ENCODE measurements at regions of chr12 and their contacts with region 1.

Region 1: DNA sequence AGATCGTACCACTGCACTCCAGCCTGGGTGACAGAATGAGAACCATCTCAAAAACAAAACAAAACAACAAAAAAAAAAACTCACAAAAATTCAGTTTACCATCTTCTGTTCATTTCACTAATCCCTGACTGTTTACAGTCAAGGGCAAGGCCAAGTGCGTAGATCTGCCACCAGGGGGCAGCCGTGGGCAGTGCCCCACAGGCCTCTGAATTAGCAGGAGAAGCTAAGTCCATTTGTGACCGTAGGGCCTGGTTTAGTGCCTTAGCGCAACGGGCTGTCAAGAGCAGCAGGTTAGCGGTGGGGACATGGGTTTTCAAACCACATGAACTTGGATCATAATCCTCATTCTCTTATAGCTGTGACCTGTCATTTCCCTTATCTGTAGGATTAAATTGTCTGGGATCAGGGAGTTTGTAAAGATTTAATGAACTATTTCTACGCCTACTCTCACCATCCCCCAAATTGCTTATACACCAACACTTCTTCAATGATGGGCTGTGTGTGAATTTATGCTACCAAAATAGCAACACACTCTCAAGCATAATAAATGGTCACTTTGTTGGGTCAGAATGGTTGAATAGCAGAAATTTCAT is 49.0 kb downstream of the KCTD10 start:
- DNase-seq: peak; percentile 74 to 85
- ATAC-seq: peak; percentile 80 to 88
- H3K4me3 ChIP-seq: no peak overlapping the region
- H3K27ac ChIP-seq: no peak overlapping the region
- H3K4me1 ChIP-seq: 0 out of 3 replicates have a peak, but pooled peaks cover 3% of the 10 kb centered on the region
- CTCF ChIP-seq: peak; percentile 92
- EP300 ChIP-seq: no peak
- POLR2A ChIP-seq: no peak
- RAD21 ChIP-seq: peak; percentile 57 to 72

Region 2: DNA sequence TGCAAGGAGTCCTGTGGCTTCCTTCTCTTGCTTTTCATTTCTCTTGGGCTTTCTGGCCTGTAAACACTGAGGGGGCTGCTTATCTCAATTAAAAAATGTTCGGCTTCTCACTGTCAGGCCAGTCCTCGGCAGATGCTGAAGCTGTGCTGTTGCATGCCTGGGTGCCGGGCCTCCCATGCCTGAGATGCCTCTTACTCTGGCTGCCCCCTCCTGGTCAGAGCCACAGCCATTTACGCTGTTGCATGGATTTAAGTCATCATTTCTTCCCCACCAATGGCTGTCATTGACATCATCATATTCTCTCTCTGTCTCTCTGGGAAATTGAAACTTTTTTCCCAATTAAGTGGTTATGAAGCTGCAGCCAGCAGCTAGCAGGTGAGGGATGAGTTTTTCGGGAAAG is 172.8 kb before region 1 on chr12:
- CTCF ChIA-PET with region 1: no interaction called
- POLR2A ChIA-PET with region 1: no interaction called
- DNase-seq: peak in 1 of 2 experiments; percentile 45
- ATAC-seq: peak in 1 of 2 experiments; percentile 78; a peak in 3 of 6 replicates
- H3K4me3 ChIP-seq: no peak overlapping the region
- H3K27ac ChIP-seq: no peak overlapping the region
- H3K4me1 ChIP-seq: no peaks in the 10 kb centered on the region
- CTCF ChIP-seq: no peak
- EP300 ChIP-seq: no peak
- POLR2A ChIP-seq: no peak
- RAD21 ChIP-seq: peak in 1 of 2 experiments; percentile 45; a peak in 1 of 5 replicates

Region 3: DNA sequence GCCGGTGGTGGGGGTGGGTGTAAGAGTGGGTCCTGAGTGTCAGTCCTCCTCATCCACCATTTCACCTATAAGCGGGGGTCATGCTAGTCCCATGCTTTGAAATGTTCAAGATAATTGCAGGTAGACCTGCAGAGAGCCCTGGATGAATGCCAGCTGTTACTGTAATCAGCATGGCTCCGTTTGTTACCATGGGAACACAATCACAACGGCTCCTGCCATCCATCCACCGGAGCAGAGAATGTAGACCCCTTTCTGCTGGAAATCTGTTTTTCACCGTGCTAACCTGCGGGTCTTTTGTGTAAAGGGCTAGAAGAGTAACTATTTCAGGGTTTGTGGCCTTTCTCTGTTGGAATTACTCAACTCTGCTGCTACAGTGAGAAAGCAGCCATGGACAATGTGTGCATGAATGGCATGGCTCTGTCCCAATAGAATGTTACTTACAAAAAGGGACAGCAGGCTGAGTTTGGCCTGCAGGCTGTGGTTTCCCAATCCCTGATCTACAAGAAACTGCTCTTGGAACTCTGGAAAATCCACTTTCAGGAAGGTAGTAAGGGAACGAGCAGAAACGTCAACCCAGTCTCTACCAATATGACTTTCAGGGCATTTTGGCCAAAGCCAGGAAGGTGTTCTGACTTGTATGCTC is 12.8 kb after region 1 on chr12:
- CTCF ChIA-PET with region 1: interaction called, 24 read pairs
- POLR2A ChIA-PET with region 1: no interaction called
- DNase-seq: no peak
- ATAC-seq: no peak
- H3K4me3 ChIP-seq: no peak overlapping the region
- H3K27ac ChIP-seq: no peak overlapping the region
- H3K4me1 ChIP-seq: no peaks in the 10 kb centered on the region
- CTCF ChIP-seq: no peak
- EP300 ChIP-seq: no peak
- POLR2A ChIP-seq: no peak
- RAD21 ChIP-seq: no peak

Region 4: DNA sequence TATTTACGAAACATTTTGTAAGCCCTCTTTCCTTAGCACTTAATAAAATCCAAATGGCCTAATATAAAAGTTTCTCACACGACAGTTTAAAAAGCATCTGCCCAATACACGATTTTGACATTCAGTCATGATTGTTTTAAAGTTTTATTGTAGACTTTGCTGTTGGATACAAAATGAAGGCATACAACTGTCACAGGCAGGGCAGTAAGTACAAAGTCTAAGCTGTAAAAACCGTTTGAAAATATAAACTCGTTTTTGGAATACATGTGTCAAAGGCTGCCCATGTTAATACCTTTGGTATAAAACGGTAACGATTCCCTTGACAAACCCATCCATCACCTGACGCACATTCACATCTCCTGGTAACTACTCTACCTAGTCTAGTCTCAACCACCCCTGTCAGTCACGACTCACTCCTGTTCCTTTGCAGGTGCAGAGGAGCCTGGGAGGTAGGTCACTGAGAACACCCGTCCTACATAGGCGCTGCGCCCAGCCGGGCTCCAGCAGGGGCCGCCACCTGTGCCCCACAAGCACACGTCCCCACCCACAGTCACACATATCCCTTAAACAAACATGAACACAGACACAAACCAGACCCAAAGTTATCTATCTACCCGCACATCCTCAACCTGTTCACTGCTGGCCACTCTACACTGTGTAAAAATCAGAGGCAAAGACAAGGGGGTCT is 21.9 kb after region 1 on chr12:
- CTCF ChIA-PET with region 1: interaction called, 24 read pairs
- POLR2A ChIA-PET with region 1: no interaction called
- DNase-seq: peak in 1 of 2 experiments; percentile 31
- ATAC-seq: peak; percentile 68 to 82; a peak in 5 of 6 replicates
- H3K4me3 ChIP-seq: no peak overlapping the region
- H3K27ac ChIP-seq: no peak overlapping the region
- H3K4me1 ChIP-seq: no peaks in the 10 kb centered on the region
- CTCF ChIP-seq: peak; percentile 20; the same call in 1 of the 3 replicates
- EP300 ChIP-seq: no peak
- POLR2A ChIP-seq: no peak
- RAD21 ChIP-seq: no peak

Region 5: DNA sequence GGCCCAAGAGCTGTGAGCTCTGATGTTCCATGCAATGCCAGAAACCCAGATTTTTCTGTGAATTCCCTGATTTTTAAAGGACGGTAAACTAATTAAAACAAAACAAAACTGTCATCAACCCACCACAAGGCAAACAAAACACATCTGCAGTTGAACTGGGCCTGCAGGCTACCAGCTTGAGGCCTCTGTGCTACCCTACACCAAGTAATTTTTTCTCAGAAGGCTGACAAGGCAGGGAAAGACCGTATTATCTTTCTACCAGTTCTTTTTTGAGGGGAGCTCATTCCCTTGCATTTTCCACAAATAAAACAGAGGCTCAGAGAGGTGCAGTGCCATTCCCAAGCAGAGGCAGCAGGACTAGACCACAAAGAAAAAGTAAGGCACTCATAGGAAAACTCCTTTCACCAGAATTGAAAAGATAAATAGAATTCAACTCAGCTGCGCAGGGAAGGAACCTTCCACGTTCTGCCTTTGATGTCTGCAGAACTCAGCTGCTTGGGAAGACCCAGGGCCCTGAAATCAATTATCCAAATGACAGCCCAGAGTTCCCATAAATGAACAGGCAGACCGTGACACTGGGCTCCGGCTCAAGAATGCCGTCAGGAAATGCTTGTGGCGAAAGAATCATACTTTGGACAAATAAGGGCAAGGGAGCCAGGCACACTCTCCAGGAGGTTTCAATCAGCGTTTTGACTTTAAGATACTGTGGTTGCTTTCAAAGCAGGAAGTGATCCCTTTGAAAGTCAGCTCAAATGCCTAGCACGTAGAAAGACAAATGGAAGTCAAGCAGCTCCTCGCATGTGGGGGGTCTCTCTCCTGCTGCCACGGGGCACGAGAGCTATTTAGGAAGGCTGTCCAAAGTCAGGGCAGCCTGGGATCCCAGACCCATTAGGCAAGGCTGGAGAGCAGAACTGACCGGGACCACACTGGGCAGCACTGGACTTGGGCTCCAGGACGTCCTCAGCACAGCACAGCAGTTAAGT is 34.9 kb after region 1 on chr12:
- CTCF ChIA-PET with region 1: interaction called, 21 read pairs
- POLR2A ChIA-PET with region 1: no interaction called
- DNase-seq: peak in 1 of 2 experiments; percentile 59
- ATAC-seq: peak; percentile 25 to 71; a peak in 4 of 6 replicates
- H3K4me3 ChIP-seq: no peak overlapping the region
- H3K27ac ChIP-seq: peak overlapping the region; percentile 58 to 87
- H3K4me1 ChIP-seq: peaks cover 39% of the 10 kb centered on the region
- CTCF ChIP-seq: no peak
- EP300 ChIP-seq: no peak
- POLR2A ChIP-seq: no peak
- RAD21 ChIP-seq: no peak

Region 6: DNA sequence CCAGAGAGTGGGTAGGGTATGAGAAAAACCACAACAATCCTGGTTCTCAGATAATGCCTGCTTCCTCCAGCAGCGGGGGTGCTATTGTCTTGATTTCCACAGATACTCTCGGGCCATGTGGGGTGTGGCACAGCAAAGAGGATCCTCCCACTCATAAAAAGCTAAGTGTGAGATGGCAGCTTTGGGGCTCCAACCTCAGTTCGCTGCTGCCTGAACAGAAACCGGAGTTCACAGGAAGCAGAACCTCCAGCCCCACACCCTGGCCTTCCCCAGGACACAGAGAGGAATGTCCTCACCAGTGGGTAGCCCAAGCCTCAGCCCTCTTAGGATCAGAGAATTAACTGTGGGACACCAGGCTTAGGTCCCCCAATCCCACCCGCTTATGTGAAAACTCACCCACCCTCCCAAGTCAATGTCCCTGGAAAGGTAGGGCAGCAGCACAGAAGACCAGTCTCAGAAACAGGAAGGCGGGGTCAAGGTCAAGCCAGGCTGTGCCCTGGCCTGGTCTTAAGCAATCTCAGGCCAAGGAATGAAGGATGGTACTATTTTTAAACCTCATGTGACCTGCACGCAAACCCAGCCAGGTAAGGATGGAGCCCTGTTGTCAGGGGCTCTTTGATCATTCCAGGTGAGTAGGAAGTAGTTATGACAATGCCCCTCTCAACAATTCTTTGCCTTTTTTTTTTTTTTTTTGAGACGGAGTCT is 40.0 kb after region 1 on chr12:
- CTCF ChIA-PET with region 1: interaction called, 21 read pairs
- POLR2A ChIA-PET with region 1: no interaction called
- DNase-seq: no peak
- ATAC-seq: no peak
- H3K4me3 ChIP-seq: no peak overlapping the region
- H3K27ac ChIP-seq: no peak overlapping the region
- H3K4me1 ChIP-seq: peaks cover 13% of the 10 kb centered on the region
- CTCF ChIP-seq: no peak
- EP300 ChIP-seq: no peak
- POLR2A ChIP-seq: no peak
- RAD21 ChIP-seq: no peak

Region 7: DNA sequence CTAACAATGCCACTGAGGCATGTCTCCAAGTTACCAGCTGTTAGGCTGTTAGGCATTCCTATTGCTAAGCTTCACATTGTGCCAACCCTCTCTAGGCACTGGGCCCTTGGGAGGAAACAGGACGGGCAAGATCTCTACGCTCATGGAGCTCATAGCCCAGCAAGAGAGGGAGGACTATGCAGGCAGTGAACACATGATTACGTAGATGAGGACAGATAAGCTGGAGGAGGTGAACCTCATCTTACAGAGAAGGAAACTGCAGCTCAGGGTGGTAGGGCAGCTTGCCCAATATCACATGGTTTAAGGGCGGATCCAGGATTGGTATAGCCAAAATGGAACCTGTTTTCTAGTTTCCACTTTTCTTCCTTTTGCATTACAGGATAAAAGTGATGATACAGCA is 57.1 kb after region 1 on chr12:
- CTCF ChIA-PET with region 1: interaction called, 11 read pairs
- POLR2A ChIA-PET with region 1: no interaction called
- DNase-seq: no peak
- ATAC-seq: no peak
- H3K4me3 ChIP-seq: no peak overlapping the region
- H3K27ac ChIP-seq: no peak overlapping the region
- H3K4me1 ChIP-seq: no peaks in the 10 kb centered on the region
- CTCF ChIP-seq: no peak
- EP300 ChIP-seq: no peak
- POLR2A ChIP-seq: no peak
- RAD21 ChIP-seq: no peak

Region 8: DNA sequence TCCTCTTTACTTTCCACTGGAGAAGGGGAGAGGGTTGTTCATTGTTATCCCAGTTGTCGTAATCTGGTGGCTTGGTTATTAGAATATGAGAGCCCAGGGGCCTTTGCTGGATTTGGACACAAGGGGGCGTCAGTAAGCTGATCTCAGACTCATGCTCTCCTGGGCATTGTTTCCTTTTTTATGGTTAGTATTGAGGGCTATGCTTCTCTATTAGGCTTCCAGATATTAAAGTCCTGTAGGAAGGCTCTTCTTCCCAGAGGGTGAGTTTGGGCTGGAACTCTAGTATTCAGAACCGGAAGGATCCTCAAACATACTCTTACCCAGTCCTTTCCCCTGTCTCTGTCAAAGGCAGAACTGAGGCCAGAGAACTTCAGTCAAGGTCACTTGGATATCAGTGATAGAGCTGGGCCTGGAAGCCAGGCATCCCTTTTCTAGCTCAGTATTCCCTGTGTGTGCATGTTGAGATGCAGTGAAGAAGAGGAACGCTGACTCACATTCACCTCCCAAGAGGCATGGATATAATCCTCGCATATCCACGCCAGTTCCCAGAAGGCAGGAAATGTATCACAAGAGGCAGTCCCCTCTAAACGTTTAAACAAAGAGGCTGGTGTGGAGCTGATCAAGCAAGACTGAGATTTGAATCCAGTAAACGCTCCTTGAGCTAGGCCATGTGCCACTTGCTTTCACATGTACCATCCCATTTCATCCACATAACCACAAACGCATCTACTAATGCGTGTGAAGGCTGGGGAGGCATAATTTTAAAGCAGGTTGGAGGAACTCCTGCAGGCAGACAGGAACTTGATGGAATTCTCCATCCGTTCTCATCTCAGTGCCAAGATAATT is 90.9 kb after region 1 on chr12:
- CTCF ChIA-PET with region 1: interaction called, 10 read pairs
- POLR2A ChIA-PET with region 1: no interaction called
- DNase-seq: peak; percentile 48 to 80
- ATAC-seq: peak; percentile 64 to 91; a peak in 4 of 6 replicates
- H3K4me3 ChIP-seq: no peak overlapping the region
- H3K27ac ChIP-seq: no peak overlapping the region
- H3K4me1 ChIP-seq: no peaks in the 10 kb centered on the region
- CTCF ChIP-seq: peak; percentile 86
- EP300 ChIP-seq: no peak
- POLR2A ChIP-seq: no peak
- RAD21 ChIP-seq: peak; percentile 74 to 82

Region 9: GRCh38 chr12:109927622-109928021 is 499.5 kb after region 1 on chr12:
- CTCF ChIA-PET with region 1: no interaction called
- POLR2A ChIA-PET with region 1: no interaction called
- DNase-seq: peak; percentile 64 to 78
- ATAC-seq: peak; percentile 91 to 92
- H3K4me3 ChIP-seq: no peak overlapping the region
- H3K27ac ChIP-seq: no peak overlapping the region
- H3K4me1 ChIP-seq: no peaks in the 10 kb centered on the region
- CTCF ChIP-seq: peak; percentile 72
- EP300 ChIP-seq: no peak
- POLR2A ChIP-seq: no peak
- RAD21 ChIP-seq: peak; percentile 51 to 66

Region 10: GRCh38 chr12:110012137-110012536 is 584.0 kb after region 1 on chr12:
- CTCF ChIA-PET with region 1: no interaction called
- POLR2A ChIA-PET with region 1: no interaction called
- DNase-seq: no peak
- ATAC-seq: no peak
- H3K4me3 ChIP-seq: no peak overlapping the region
- H3K27ac ChIP-seq: no peak overlapping the region
- H3K4me1 ChIP-seq: peaks cover 8% of the 10 kb centered on the region; the same call in 2 of the 3 replicates
- CTCF ChIP-seq: no peak
- EP300 ChIP-seq: no peak
- POLR2A ChIP-seq: no peak
- RAD21 ChIP-seq: no peak